Spleen (tissue), 13 donors: ENCODE measurements at regions of chr11 and their contacts with region 1.

Region 1: DNA sequence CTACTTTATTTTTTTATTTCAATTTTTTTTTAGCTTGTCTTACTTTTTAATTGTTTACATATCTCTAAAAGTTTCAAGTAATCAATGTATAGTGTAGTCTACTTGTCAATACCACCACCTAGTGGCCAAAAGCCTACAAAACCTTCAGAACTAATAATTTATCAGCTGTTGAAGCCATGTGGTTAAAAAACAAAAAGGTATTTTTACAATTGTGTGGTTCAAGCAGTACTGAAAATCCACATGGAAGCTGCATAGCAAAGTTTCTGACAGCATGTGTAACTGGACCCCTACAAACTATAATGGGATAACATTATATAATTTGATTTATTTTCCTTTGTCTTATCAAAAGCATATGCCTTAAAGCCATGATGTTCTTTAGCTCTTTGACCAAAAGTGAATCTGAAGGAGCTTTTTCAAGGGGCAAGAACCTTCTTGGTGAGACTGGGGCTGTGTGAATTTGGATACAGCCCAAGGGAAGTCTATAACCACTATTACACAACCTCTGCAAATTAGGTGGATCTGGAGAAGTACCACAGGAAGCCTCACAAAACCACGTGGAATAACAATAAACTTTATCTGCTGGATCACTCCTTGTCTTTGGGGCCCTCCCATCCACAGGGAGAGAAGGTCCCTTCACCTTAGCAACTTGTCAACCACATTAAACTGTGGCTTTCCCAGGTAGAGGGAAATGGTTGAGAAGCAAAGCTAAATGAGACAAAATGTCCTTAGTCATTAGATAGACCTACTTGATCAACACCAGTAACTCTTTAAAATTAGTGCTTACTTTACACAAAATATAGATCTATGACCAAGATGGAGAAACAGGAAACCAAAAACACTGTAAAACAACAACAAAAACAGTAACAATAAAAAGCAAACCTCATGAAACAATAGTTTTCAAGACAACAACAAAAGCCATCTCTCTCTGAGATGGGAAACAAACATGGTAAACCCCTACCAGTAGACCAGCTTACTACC is 9.9 kb downstream of the NARS2 start:
- DNase-seq: no peak
- H3K4me3 ChIP-seq: no peak overlapping the region
- H3K27ac ChIP-seq: peak overlapping the region in 3 of 8 donors; percentile 4 to 40 (median 19)
- H3K4me1 ChIP-seq: peaks cover 18 to 61% (median 35%) of the 10 kb centered on the region in 6 donors
- H3K27me3 ChIP-seq: no peaks in the 10 kb centered on the region
- CTCF ChIP-seq: peak; percentile 45 to 80 (median 73)
- POLR2A ChIP-seq: no peak

Region 2: GRCh38 chr11:78228467-78228866 is 336.3 kb before region 1 on chr11:
- intact Hi-C with region 1: loop called (anchors 5 kb)
- DNase-seq: no peak
- H3K4me3 ChIP-seq: no peak overlapping the region
- H3K27ac ChIP-seq: no peak overlapping the region
- H3K4me1 ChIP-seq: peaks cover 0 to 37% (median 14%) of the 10 kb centered on the region in 6 donors
- H3K27me3 ChIP-seq: no peaks in the 10 kb centered on the region
- CTCF ChIP-seq: peak in 10 of 11 experiments; percentile 24 to 71 (median 58)
- POLR2A ChIP-seq: no peak

Region 3: DNA sequence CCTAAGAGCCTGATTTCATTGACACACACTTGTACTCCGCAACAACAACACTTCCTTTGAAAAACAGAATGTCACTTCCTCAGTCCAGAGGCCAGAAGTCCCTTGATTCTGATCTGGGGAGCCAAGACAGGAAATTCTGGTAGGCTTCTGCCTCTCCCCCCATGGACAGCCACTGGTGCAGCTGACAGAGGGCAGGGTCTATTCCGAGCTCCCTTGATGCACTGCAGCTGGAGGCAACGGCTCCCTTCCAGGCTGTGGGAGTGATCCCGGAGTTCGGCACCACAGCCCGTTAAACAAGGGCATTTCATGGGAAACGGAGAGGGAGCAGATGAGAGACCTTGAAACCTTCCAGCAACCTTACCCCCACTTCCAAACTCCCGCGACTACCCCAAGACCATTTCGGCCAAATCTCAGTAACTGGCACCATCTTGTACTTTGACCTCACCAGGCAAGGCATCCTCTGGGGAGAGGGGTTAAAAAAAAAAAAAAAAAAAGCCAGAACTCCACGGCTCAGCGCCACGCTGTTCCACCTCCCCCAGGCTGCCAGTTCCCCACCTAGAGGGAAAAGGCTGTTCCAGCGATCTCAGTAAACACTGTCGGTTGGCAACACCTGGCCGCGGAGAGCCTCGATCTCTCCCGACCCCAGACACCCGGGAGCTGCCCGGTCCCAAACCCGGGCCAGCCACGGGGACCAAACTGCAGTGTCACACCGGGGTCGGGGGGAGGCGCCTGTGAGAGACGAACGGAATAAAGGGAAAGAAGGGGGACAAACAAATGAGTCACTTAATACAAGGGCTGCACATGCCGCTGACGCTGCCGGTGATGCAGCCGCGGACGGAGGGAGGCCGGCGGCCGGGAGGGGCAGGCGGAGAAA is 148.2 kb before region 1 on chr11:
- intact Hi-C with region 1: loop called (anchors 5 kb)
- DNase-seq: peak; percentile 95
- H3K4me3 ChIP-seq: peak overlapping the region; percentile 58 to 81 (median 73)
- H3K27ac ChIP-seq: peak overlapping the region; percentile 92 to 100 (median 98)
- H3K4me1 ChIP-seq: peaks cover 8 to 84% (median 59%) of the 10 kb centered on the region in 6 donors
- H3K27me3 ChIP-seq: no peaks in the 10 kb centered on the region
- CTCF ChIP-seq: peak; percentile 20 to 76 (median 51)
- POLR2A ChIP-seq: peak in 2 of 3 donors; percentile 47 to 52

Region 4: GRCh38 chr11:78615719-78616118 is 50.9 kb after region 1 on chr11:
- intact Hi-C with region 1: no loop called
- DNase-seq: no peak
- H3K4me3 ChIP-seq: no peak overlapping the region
- H3K27ac ChIP-seq: no peak overlapping the region
- H3K4me1 ChIP-seq: no peaks in the 10 kb centered on the region
- H3K27me3 ChIP-seq: no peaks in the 10 kb centered on the region
- CTCF ChIP-seq: no peak
- POLR2A ChIP-seq: no peak